Activated CD8-positive, alpha-beta T cell treated with anti-CD3 and anti-CD28 coated beads, Interleukin-2, amount 10 ng/mL, durations not matched to agents 7 days and 5 days (primary cell): ENCODE measurements at regions of chr6 and their contacts with region 1.

Region 1: GRCh38 chr6:25556516-25556915 is 95.5 kb upstream of the SCGN start:
- DNase-seq: peak; percentile 85
- ATAC-seq: peak; percentile 71
- H3K4me3 Mint-ChIP-seq: no peak overlapping the region
- H3K27ac Mint-ChIP-seq: no peak overlapping the region
- H3K4me1 Mint-ChIP-seq: peaks cover 1% of the 10 kb centered on the region
- H3K27me3 Mint-ChIP-seq: no peaks in the 10 kb centered on the region

Region 2: GRCh38 chr6:25250878-25251277 is 305.6 kb before region 1 on chr6:
- CTCF ChIA-PET with region 1: interaction called, 10 read pairs
- POLR2A ChIA-PET with region 1: no interaction called
- DNase-seq: no peak
- ATAC-seq: no peak
- H3K4me3 Mint-ChIP-seq: no peak overlapping the region
- H3K27ac Mint-ChIP-seq: no peak overlapping the region
- H3K4me1 Mint-ChIP-seq: peaks cover 6% of the 10 kb centered on the region
- H3K27me3 Mint-ChIP-seq: peaks cover 9% of the 10 kb centered on the region

Region 3: GRCh38 chr6:25534942-25535631 is 21.4 kb before region 1 on chr6:
- CTCF ChIA-PET with region 1: interaction called, 13 read pairs
- POLR2A ChIA-PET with region 1: no interaction called
- DNase-seq: no peak
- ATAC-seq: no peak
- H3K4me3 Mint-ChIP-seq: no peak overlapping the region
- H3K27ac Mint-ChIP-seq: no peak overlapping the region
- H3K4me1 Mint-ChIP-seq: no peaks in the 10 kb centered on the region
- H3K27me3 Mint-ChIP-seq: no peaks in the 10 kb centered on the region

Region 4: GRCh38 chr6:25576919-25577318 is 20.4 kb after region 1 on chr6:
- CTCF ChIA-PET with region 1: interaction called, 10 read pairs
- POLR2A ChIA-PET with region 1: no interaction called
- DNase-seq: no peak
- ATAC-seq: no peak
- H3K4me3 Mint-ChIP-seq: no peak overlapping the region
- H3K27ac Mint-ChIP-seq: no peak overlapping the region
- H3K4me1 Mint-ChIP-seq: peaks cover 15% of the 10 kb centered on the region
- H3K27me3 Mint-ChIP-seq: no peaks in the 10 kb centered on the region